MCF 10A (cell line): ENCODE measurements at regions of chr21 and their contacts with region 1.

Region 1: GRCh38 chr21:15221799-15222386 is 157.1 kb upstream of the NRIP1 start:
- DNase-seq: peak; percentile 98
- H3K4me3 Mint-ChIP-seq: no peak overlapping the region
- H3K27ac Mint-ChIP-seq: no peak overlapping the region
- H3K4me1 Mint-ChIP-seq: peaks cover 34% of the 10 kb centered on the region
- H3K27me3 Mint-ChIP-seq: no peaks in the 10 kb centered on the region
- CTCF ChIP-seq: no peak

Region 2: DNA sequence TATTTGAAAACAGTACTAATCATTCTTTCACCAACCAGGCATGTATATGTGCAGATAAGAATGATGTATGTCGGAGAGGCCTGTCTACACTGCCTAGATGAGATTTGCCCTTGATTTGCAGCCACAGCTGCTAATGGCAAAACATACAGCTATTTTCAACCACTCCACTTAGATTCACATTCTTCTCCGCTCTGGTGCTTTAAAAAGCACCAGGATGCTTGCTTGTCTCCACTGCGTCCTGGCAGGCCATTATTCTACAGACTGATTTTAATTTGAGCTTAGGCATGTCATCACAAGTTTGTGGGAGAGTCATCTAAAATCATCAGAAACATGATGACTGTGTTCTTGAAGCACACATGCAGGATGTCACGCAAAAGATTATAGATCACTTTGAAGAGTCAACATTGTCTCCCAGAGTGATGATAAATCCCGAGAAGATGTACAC is 38.1 kb before region 1 on chr21:
- CTCF ChIA-PET with region 1: no interaction called
- POLR2A ChIA-PET with region 1: interaction called, 13 read pairs
- intact Hi-C with region 1: no loop called
- DNase-seq: no peak
- H3K4me3 Mint-ChIP-seq: no peak overlapping the region
- H3K27ac Mint-ChIP-seq: no peak overlapping the region
- H3K4me1 Mint-ChIP-seq: peaks cover 5% of the 10 kb centered on the region
- H3K27me3 Mint-ChIP-seq: no peaks in the 10 kb centered on the region
- CTCF ChIP-seq: no peak

Region 3: DNA sequence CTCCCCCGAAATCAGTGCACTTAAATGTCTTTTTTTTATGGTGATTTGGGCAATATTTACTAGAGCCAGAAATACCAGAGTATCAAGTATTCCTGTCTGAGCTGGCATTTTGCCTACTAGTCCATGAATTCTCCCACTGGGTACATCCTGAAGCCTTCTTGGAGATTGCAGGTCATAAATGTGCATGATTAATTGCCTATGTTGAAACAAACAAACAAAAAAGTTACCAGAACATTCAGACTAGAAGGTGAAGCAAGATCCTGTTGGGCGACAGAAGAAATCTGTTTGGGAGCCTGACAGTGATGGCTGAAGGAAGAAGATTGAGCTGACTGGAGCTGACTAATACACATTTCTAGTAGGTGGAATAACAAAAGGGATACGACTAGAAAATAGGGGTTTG is 29.6 kb before region 1 on chr21:
- CTCF ChIA-PET with region 1: interaction called, 3 read pairs
- POLR2A ChIA-PET with region 1: interaction called, 10 read pairs
- intact Hi-C with region 1: loop called (anchors 1 kb)
- DNase-seq: peak; percentile 95
- H3K4me3 Mint-ChIP-seq: no peak overlapping the region
- H3K27ac Mint-ChIP-seq: peak overlapping the region; percentile 8
- H3K4me1 Mint-ChIP-seq: peaks cover 11% of the 10 kb centered on the region
- H3K27me3 Mint-ChIP-seq: no peaks in the 10 kb centered on the region
- CTCF ChIP-seq: no peak

Region 4: GRCh38 chr21:15241997-15242736 is 20.3 kb after region 1 on chr21:
- CTCF ChIA-PET with region 1: interaction called, 5 read pairs
- POLR2A ChIA-PET with region 1: interaction called, 16 read pairs
- intact Hi-C with region 1: no loop called
- DNase-seq: peak; percentile 21
- H3K4me3 Mint-ChIP-seq: no peak overlapping the region
- H3K27ac Mint-ChIP-seq: no peak overlapping the region
- H3K4me1 Mint-ChIP-seq: peaks cover 11% of the 10 kb centered on the region
- H3K27me3 Mint-ChIP-seq: no peaks in the 10 kb centered on the region
- CTCF ChIP-seq: no peak

Region 5: GRCh38 chr21:15293240-15293639 is 71.3 kb after region 1 on chr21:
- CTCF ChIA-PET with region 1: no interaction called
- POLR2A ChIA-PET with region 1: interaction called, 5 read pairs
- intact Hi-C with region 1: loop called (anchors 5 kb)
- DNase-seq: peak; percentile 61
- H3K4me3 Mint-ChIP-seq: no peak overlapping the region
- H3K27ac Mint-ChIP-seq: no peak overlapping the region
- H3K4me1 Mint-ChIP-seq: peaks cover 30% of the 10 kb centered on the region
- H3K27me3 Mint-ChIP-seq: no peaks in the 10 kb centered on the region
- CTCF ChIP-seq: no peak

Region 6: DNA sequence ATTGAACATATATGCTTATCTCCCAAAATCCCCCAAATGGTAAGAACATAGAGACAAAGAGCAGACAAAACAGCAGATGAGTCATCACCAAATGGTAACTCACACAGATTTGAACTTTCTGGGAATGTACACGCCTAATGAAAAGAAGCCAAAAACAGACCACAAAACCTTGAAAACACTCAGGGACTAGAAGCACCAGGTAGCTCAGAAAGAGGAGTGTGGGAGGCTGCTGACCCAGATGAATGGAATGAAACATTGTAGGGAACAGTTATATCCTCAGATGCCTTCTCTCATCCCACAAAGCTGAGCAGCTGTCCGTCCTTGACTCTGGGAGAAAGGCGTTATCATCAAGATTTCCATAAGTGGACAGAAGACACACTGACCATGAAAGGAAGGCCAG is 200.9 kb after region 1 on chr21:
- CTCF ChIA-PET with region 1: interaction called, 3 read pairs
- POLR2A ChIA-PET with region 1: no interaction called
- intact Hi-C with region 1: loop called (anchors 5 kb)
- DNase-seq: peak; percentile 90
- H3K4me3 Mint-ChIP-seq: peak overlapping the region; percentile 1
- H3K27ac Mint-ChIP-seq: peak overlapping the region; percentile 37
- H3K4me1 Mint-ChIP-seq: peaks cover 21% of the 10 kb centered on the region
- H3K27me3 Mint-ChIP-seq: no peaks in the 10 kb centered on the region
- CTCF ChIP-seq: no peak